ENCODE measurements at regions of chr13 and their contacts with region 1.

Region 1: DNA sequence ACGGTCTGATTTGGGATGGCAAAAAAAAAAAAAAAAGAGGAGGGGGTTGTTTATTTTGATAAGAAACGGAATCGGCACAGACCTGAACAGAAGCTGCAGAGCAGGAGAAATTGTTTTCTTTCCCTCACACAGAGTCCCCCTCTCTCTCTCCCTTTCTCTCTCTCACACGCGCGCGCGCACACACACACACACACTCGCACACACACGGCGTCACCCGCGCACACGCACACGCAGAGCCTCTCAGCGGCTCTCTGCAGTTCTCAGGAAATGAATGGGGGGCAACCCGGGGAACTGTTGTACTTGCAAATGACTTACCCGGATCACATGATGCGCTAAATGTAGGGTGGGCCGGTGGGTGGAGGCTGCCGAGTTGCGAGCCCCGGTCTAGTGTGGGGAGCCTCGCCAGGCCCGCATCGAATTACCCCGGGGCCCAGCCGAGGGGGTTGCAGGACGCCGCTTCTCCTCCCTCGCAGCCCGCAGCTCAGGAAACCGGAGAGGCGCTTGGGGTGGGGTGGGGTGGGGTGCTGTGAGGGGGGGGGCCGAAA is 475 bp downstream of the KLF12 start:
- DNase-seq: peak; percentile 85
- ATAC-seq: peak; percentile 69
- H3K4me3 Mint-ChIP-seq: peak overlapping the region; percentile 98
- H3K27ac Mint-ChIP-seq: peak overlapping the region; percentile 100
- H3K4me1 Mint-ChIP-seq: peaks cover 30% of the 10 kb centered on the region
- H3K27me3 Mint-ChIP-seq: no peaks in the 10 kb centered on the region

Region 2: DNA sequence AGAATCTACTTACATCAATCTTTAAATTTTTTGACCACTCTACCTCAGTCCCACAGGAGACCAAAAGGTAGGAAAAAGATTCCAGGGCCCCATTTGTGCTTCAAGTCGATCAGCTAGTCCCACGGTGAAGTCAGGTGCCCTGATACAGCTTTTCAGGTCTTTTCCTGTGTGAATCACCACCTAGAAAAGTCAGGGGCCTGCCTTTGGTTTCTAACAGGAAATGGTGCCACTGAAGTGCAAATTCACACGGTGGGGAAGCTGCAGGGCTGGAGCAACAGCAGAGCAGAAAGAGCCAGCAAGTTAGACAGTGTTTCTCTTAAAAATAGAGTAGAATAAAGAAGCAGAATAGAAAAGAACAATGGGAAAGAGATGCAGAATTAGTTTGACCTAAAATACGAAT is 107.0 kb before region 1 on chr13:
- POLR2A ChIA-PET with region 1: interaction called, 11 read pairs
- DNase-seq: peak; percentile 51
- ATAC-seq: peak; percentile 99
- H3K4me3 Mint-ChIP-seq: peak overlapping the region; percentile 87
- H3K27ac Mint-ChIP-seq: peak overlapping the region; percentile 92
- H3K4me1 Mint-ChIP-seq: peaks cover 41% of the 10 kb centered on the region
- H3K27me3 Mint-ChIP-seq: no peaks in the 10 kb centered on the region

Region 3: DNA sequence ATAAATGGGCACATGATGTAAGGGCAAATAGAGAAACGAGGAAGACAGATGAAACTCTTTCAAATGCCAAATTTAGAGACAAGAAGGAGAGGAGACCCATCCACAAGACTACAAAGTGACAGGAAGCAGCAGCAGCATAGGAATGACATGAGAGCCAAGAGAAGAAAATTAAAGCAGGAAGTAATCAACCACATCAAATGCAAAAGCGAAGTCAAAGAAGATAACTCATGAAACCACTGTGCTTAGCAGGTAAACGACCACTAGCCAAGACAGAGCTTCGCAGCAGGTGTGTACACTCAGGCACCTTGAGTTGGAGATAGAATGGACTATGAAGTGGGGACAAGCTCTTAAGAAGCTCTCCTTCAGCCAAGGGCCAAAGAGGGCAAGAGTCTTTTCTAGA is 63.7 kb before region 1 on chr13:
- POLR2A ChIA-PET with region 1: interaction called, 12 read pairs
- DNase-seq: peak; percentile 30
- ATAC-seq: peak; percentile 90
- H3K4me3 Mint-ChIP-seq: peak overlapping the region; percentile 75
- H3K27ac Mint-ChIP-seq: peak overlapping the region; percentile 81
- H3K4me1 Mint-ChIP-seq: peaks cover 42% of the 10 kb centered on the region
- H3K27me3 Mint-ChIP-seq: no peaks in the 10 kb centered on the region

Region 4: GRCh38 chr13:74250738-74251190 is 117.0 kb after region 1 on chr13:
- POLR2A ChIA-PET with region 1: interaction called, 17 read pairs
- DNase-seq: no peak
- ATAC-seq: no peak
- H3K4me3 Mint-ChIP-seq: no peak overlapping the region
- H3K27ac Mint-ChIP-seq: no peak overlapping the region
- H3K4me1 Mint-ChIP-seq: peaks cover 51% of the 10 kb centered on the region
- H3K27me3 Mint-ChIP-seq: no peaks in the 10 kb centered on the region

Measured in activated naive CD8-positive, alpha-beta T cell treated with anti-CD3 and anti-CD28 coated beads, Interleukin-2, amount 10 ng/mL, durations not matched to agents 7 days and 5 days (primary cell).